Activated CD8-positive, alpha-beta T cell treated with anti-CD3 and anti-CD28 coated beads, Interleukin-2, amount 10 ng/mL, durations not matched to agents 7 days and 5 days (primary cell): ENCODE measurements at regions of chr5 and their contacts with region 1.

Region 1: GRCh38 chr5:87400305-87400899 is 12.3 kb downstream of the CCNH start:
- DNase-seq: no peak
- ATAC-seq: peak; percentile 63
- H3K4me3 Mint-ChIP-seq: no peak overlapping the region
- H3K27ac Mint-ChIP-seq: no peak overlapping the region
- H3K4me1 Mint-ChIP-seq: peaks cover 23% of the 10 kb centered on the region
- H3K27me3 Mint-ChIP-seq: no peaks in the 10 kb centered on the region

Region 2: GRCh38 chr5:86880785-86881492 is 519.5 kb before region 1 on chr5:
- CTCF ChIA-PET with region 1: interaction called, 15 read pairs
- POLR2A ChIA-PET with region 1: no interaction called
- DNase-seq: peak; percentile 64
- ATAC-seq: peak; percentile 90
- H3K4me3 Mint-ChIP-seq: no peak overlapping the region
- H3K27ac Mint-ChIP-seq: no peak overlapping the region
- H3K4me1 Mint-ChIP-seq: no peaks in the 10 kb centered on the region
- H3K27me3 Mint-ChIP-seq: peaks cover 7% of the 10 kb centered on the region

Region 3: DNA sequence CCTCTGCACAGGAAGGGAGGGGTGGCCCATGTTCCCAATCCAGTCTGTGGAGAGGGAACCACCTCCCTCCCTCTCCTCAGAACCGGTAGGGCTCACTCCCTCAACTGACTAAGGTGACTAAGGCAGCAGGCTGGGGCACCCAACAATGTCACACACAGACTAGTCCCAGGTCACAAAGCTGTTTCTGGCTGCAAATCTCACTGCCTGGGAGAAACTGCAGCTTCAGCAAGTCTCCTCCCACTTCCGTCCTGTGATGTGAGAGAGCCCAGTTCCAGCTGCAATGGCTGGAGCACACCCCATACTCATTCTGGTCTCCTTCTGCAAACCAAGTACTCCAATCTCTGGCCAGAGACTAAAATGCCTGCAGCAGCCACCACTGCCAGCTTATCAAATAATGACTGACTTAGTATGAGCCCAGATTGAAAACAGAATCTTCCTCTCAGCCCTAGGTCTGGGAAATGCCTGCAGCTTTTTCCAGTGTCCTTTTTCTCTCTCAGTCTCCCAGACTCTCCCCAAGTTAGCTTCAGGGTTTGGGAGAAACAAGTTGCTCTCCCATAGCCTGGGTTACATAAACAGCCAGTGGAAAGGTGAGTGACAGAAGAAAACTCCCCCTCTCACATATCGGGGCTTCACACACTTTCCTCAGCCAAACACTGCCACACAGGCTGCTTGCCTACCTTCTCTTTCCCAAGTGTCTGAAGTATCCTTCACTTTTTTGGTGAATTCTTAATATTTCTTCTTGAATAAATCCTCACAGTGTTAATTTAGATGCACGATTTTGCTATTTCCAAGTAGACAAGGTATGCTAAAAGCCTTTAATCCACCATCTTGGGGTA is 380.1 kb before region 1 on chr5:
- CTCF ChIA-PET with region 1: interaction called, 15 read pairs
- POLR2A ChIA-PET with region 1: no interaction called
- DNase-seq: peak; percentile 60
- ATAC-seq: peak; percentile 82
- H3K4me3 Mint-ChIP-seq: no peak overlapping the region
- H3K27ac Mint-ChIP-seq: peak overlapping the region; percentile 81
- H3K4me1 Mint-ChIP-seq: peaks cover 14% of the 10 kb centered on the region
- H3K27me3 Mint-ChIP-seq: no peaks in the 10 kb centered on the region

Region 4: GRCh38 chr5:87074934-87075541 is 325.4 kb before region 1 on chr5:
- CTCF ChIA-PET with region 1: interaction called, 11 read pairs
- POLR2A ChIA-PET with region 1: no interaction called
- DNase-seq: peak; percentile 79
- ATAC-seq: peak; percentile 95
- H3K4me3 Mint-ChIP-seq: peak overlapping the region; percentile 41
- H3K27ac Mint-ChIP-seq: peak overlapping the region; percentile 95
- H3K4me1 Mint-ChIP-seq: peaks cover 55% of the 10 kb centered on the region
- H3K27me3 Mint-ChIP-seq: no peaks in the 10 kb centered on the region

Region 5: GRCh38 chr5:87267574-87268125 is 132.8 kb before region 1 on chr5 and contains the start of gene RASA1:
- CTCF ChIA-PET with region 1: interaction called, 16 read pairs
- POLR2A ChIA-PET with region 1: no interaction called
- DNase-seq: peak; percentile 87
- ATAC-seq: peak; percentile 74
- H3K4me3 Mint-ChIP-seq: peak within 1 kb of the TSS; percentile 98
- H3K27ac Mint-ChIP-seq: peak within 1 kb of the TSS; percentile 94
- H3K4me1 Mint-ChIP-seq: peaks cover 32% of the 10 kb centered on the region
- H3K27me3 Mint-ChIP-seq: no peaks in the 10 kb centered on the region
- total RNA-seq, gene RASA1: 12.9 to 14.8 TPM

Region 6: DNA sequence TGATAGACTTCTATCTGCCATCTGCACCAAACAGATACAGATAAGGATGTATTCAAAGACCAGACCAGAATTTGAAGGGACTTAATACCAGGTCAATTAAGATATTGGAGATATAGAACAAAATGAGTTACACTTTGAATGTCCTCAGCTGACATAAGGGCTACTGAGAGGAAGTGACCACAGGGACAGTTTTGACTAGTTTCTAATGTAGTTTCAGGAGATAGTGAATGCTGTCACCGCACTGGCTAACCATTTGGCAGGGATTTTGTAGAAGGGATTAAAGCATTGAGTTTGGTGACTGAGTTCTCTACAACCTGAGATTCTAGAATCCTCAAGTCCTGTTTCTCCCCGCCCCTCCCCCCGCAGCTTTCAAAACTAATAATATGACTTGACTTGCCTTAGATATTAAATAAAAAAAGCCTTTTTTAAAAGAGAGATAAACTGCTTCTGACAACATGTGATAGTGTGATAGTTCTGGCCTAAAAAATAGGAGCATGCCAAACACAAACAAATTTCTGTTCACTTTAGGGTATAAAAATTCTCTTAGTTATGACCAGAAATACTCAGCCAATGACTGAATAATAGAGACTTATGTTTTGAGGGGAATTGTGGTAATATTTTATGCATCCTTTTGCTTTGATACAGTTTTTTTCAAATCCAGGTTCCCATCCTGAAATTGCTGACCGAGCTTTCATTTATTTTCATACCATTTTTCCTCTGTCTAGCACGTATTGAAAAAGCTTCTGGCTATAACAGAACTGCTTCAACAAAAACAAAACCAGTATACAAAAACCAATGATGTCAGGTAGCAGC is 10.1 kb before region 1 on chr5:
- CTCF ChIA-PET with region 1: interaction called, 11 read pairs
- POLR2A ChIA-PET with region 1: no interaction called
- DNase-seq: no peak
- ATAC-seq: no peak
- H3K4me3 Mint-ChIP-seq: no peak overlapping the region
- H3K27ac Mint-ChIP-seq: no peak overlapping the region
- H3K4me1 Mint-ChIP-seq: peaks cover 2% of the 10 kb centered on the region
- H3K27me3 Mint-ChIP-seq: no peaks in the 10 kb centered on the region

Region 7: GRCh38 chr5:87412630-87413342 is 12.4 kb after region 1 on chr5 and contains the start of gene CCNH:
- CTCF ChIA-PET with region 1: interaction called, 37 read pairs
- POLR2A ChIA-PET with region 1: interaction called, 3 read pairs
- DNase-seq: peak; percentile 98
- ATAC-seq: peak; percentile 96
- H3K4me3 Mint-ChIP-seq: peak within 1 kb of the TSS; percentile 88
- H3K27ac Mint-ChIP-seq: peak within 1 kb of the TSS; percentile 91
- H3K4me1 Mint-ChIP-seq: peaks cover 24% of the 10 kb centered on the region
- H3K27me3 Mint-ChIP-seq: no peaks in the 10 kb centered on the region
- total RNA-seq, gene CCNH: 51.0 to 56.2 TPM

Region 8: GRCh38 chr5:87442419-87442818 is 42.0 kb after region 1 on chr5:
- CTCF ChIA-PET with region 1: no interaction called
- POLR2A ChIA-PET with region 1: no interaction called
- DNase-seq: no peak
- ATAC-seq: no peak
- H3K4me3 Mint-ChIP-seq: no peak overlapping the region
- H3K27ac Mint-ChIP-seq: no peak overlapping the region
- H3K4me1 Mint-ChIP-seq: no peaks in the 10 kb centered on the region
- H3K27me3 Mint-ChIP-seq: peaks cover 7% of the 10 kb centered on the region